CD14-positive monocyte (primary cell): ENCODE measurements at regions of chr9 and their contacts with region 1.

Region 1: DNA sequence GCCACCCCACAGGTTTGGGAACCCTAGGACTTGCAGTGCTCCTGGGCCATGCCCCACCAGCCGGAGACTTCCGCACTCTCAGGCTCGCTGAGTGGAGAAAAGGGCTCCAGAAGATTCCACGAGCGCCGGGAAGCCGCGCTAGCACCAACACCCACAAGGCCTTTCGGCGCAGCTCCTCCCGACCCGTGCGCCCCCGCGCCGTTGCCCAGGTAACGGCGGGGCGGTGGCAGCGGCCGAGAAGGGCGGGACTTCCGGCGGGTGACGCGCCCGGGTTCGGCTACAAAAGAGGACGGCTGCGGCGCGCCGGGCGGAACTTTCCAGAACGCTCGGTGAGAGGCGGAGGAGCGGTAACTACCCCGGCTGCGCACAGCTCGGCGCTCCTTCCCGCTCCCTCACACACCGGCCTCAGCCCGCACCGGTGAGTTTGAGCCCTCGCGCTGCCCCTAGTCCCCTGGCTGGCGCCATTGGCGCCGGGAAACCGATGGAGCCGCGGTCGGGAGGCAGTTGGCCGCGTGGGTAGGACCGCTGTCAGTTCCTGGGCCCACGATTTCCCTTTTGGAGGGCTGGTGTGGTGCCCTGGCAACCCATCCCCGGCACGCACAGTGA is at the start of gene DNAJA1:
- DNase-seq: peak; percentile 92 to 96 (median 95)
- H3K4me3 ChIP-seq: peak within 1 kb of the TSS; percentile 91 to 100 (median 99)
- H3K4me3 Mint-ChIP-seq: peak within 1 kb of the TSS; percentile 95 to 97
- H3K27ac ChIP-seq: peak within 1 kb of the TSS; percentile 97 to 99
- H3K27ac Mint-ChIP-seq: peak within 1 kb of the TSS; percentile 92 to 96 (median 95)
- H3K4me1 ChIP-seq: peaks cover 44 to 55% of the 10 kb centered on the region in 2 donors
- H3K4me1 Mint-ChIP-seq: peaks cover 55% of the 10 kb centered on the region
- H3K27me3 ChIP-seq: no peaks in the 10 kb centered on the region
- H3K27me3 Mint-ChIP-seq: no peaks in the 10 kb centered on the region
- CTCF ChIP-seq: no peak
- polyA plus RNA-seq, gene DNAJA1: 73.3 to 112 (median 93.6) TPM

Region 2: DNA sequence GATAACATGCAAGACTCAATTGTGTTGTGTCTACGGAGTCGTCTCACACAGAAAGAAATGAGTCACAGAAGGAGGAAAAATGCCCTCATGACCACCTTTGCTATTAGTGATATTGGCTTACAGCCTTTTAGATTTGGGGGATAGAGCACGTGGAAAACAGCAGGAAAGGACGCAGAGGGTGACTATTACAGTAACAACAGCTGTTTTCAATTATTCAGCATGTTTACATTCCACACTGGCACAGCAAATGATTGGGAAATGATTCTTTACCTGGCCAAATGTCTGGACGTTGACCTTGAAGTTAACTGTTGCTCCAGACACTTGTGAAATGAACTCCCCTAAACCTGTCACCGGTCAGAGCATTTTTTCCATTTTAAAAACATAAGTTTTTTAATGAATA is 70.4 kb before region 1 on chr9:
- intact Hi-C with region 1: no loop called
- DNase-seq: no peak
- H3K4me3 ChIP-seq: no peak overlapping the region
- H3K4me3 Mint-ChIP-seq: no peak overlapping the region
- H3K27ac ChIP-seq: no peak overlapping the region
- H3K27ac Mint-ChIP-seq: no peak overlapping the region
- H3K4me1 ChIP-seq: no peaks in the 10 kb centered on the region
- H3K4me1 Mint-ChIP-seq: no peaks in the 10 kb centered on the region
- H3K27me3 ChIP-seq: peaks cover 6 to 16% of the 10 kb centered on the region in 2 donors
- H3K27me3 Mint-ChIP-seq: peaks cover 11 to 35% (median 14%) of the 10 kb centered on the region in 3 donors
- CTCF ChIP-seq: no peak

Region 3: DNA sequence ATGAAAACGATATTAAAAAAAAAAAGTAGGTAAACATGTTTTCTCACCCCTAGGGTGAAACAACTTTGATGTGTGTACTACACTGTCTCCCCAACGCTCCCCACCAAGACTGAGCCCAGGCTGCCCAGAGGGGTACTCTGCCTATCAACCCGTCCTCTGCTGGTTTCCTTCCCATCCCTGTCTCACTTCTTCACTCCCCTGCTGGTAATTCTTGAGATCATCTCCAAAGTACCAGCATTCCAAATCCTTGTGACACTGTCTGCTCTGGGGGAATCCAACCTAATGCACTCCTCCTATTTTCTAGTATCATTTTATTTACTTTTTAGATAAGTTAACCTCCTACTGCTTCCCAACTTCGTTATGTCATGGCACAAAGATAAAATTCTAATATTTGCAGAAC is 17.3 kb before region 1 on chr9:
- intact Hi-C with region 1: loop called in 1 of 2 experiments (anchors 2 kb)
- DNase-seq: no peak
- H3K4me3 ChIP-seq: no peak overlapping the region
- H3K4me3 Mint-ChIP-seq: no peak overlapping the region
- H3K27ac ChIP-seq: no peak overlapping the region
- H3K27ac Mint-ChIP-seq: peak overlapping the region in 1 of 7 donors; percentile 59
- H3K4me1 ChIP-seq: peaks cover 12 to 13% of the 10 kb centered on the region in 2 donors
- H3K4me1 Mint-ChIP-seq: peaks cover 10% of the 10 kb centered on the region
- H3K27me3 ChIP-seq: no peaks in the 10 kb centered on the region
- H3K27me3 Mint-ChIP-seq: no peaks in the 10 kb centered on the region
- CTCF ChIP-seq: no peak

Region 4: GRCh38 chr9:33264473-33265177 is 239.6 kb after region 1 on chr9 and contains the starts of genes BAG1 and CHMP5:
- intact Hi-C with region 1: loop called in 1 of 2 experiments (anchors 10 kb)
- DNase-seq: peak; percentile 99
- H3K4me3 ChIP-seq: peak within 1 kb of the TSS; percentile 79 to 98 (median 88)
- H3K4me3 Mint-ChIP-seq: peak within 1 kb of the TSS; percentile 97 to 99
- H3K27ac ChIP-seq: peak within 1 kb of the TSS; percentile 87 to 96
- H3K27ac Mint-ChIP-seq: peak within 1 kb of the TSS; percentile 97 to 100 (median 99)
- H3K4me1 ChIP-seq: peaks cover 22 to 26% of the 10 kb centered on the region in 2 donors
- H3K4me1 Mint-ChIP-seq: peaks cover 35% of the 10 kb centered on the region
- H3K27me3 ChIP-seq: no peaks in the 10 kb centered on the region
- H3K27me3 Mint-ChIP-seq: peaks cover 0 to 1% (median 0%) of the 10 kb centered on the region in 3 donors
- CTCF ChIP-seq: peak; percentile 17
- polyA plus RNA-seq, gene BAG1: 41.8 to 94.5 (median 93.6) TPM
- polyA plus RNA-seq, gene CHMP5: 33.5 to 72.5 (median 65.0) TPM

Region 5: DNA sequence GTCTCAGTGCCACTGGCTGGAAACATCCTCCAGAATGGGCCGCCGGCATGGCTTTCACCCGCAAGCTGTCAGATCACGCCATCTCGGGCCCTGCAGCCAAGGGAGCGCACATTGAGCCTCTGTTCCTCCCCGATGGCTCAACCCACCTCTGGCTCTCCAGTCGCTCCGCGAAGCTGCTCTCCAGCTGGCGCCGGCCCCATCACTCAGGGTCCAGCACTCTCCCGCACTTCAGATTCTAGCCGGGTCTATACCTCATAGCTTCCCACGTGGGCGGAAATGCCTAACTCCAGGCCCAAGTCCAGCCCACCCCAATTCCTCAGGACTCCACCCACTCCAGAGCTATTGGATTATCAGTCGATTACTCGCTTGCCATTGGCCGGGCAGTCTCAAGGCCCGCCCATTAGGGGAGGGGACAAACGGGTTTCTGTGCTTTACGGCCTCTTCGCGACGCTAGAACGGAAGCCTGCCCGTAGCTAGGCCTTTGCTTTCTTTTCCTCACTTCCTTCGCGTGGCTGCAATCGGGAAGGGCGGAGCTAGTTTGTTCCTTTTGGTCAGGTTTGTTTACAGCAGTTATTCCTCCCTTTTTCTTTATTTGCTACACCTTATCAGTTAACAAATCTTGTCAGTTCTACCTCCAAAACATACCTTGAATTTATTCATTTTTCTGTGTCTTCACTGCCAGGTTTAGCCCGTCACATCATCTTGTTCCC is 448.7 kb after region 1 on chr9 and contains the start of gene NOL6:
- intact Hi-C with region 1: loop called in 1 of 2 experiments (anchors 10 kb)
- DNase-seq: peak; percentile 97 to 99 (median 98)
- H3K4me3 ChIP-seq: peak within 1 kb of the TSS; percentile 82 to 99 (median 97)
- H3K4me3 Mint-ChIP-seq: peak within 1 kb of the TSS; percentile 99 to 100
- H3K27ac ChIP-seq: peak within 1 kb of the TSS; percentile 42 to 77
- H3K27ac Mint-ChIP-seq: peak within 1 kb of the TSS; percentile 89 to 97 (median 93)
- H3K4me1 ChIP-seq: peaks cover 16 to 19% of the 10 kb centered on the region in 2 donors
- H3K4me1 Mint-ChIP-seq: peaks cover 16% of the 10 kb centered on the region
- H3K27me3 ChIP-seq: no peaks in the 10 kb centered on the region
- H3K27me3 Mint-ChIP-seq: no peaks in the 10 kb centered on the region
- CTCF ChIP-seq: no peak
- polyA plus RNA-seq, gene NOL6: 4.6 to 21.9 (median 10.1) TPM